Transverse colon (tissue), 4 donors: ENCODE measurements at regions of chr2 and their contacts with region 1.

Region 1: GRCh38 chr2:239561446-239562001 is 160.7 kb upstream of the HDAC4 start:
- DNase-seq: peak; percentile 25
- H3K4me3 ChIP-seq: no peak overlapping the region
- H3K27ac ChIP-seq: no peak overlapping the region
- H3K4me1 ChIP-seq: no peaks in the 10 kb centered on the region
- H3K27me3 ChIP-seq: peaks cover 12% of the 10 kb centered on the region
- CTCF ChIP-seq: no peak
- EP300 ChIP-seq: no peak
- POLR2A ChIP-seq: no peak

Region 2: GRCh38 chr2:239257511-239257937 is 304.0 kb before region 1 on chr2:
- in situ Hi-C with region 1: no loop called
- intact Hi-C with region 1: no loop called
- DNase-seq: no peak
- H3K4me3 ChIP-seq: no peak overlapping the region
- H3K27ac ChIP-seq: peak overlapping the region; percentile 8 to 57 (median 30)
- H3K4me1 ChIP-seq: peaks cover 9 to 60% (median 23%) of the 10 kb centered on the region in 4 donors
- H3K27me3 ChIP-seq: no peaks in the 10 kb centered on the region
- CTCF ChIP-seq: no peak
- EP300 ChIP-seq: no peak
- POLR2A ChIP-seq: no peak

Region 3: GRCh38 chr2:239516954-239517305 is 44.6 kb before region 1 on chr2:
- in situ Hi-C with region 1: no loop called
- intact Hi-C with region 1: loop called (anchors 1 kb)
- DNase-seq: no peak
- H3K4me3 ChIP-seq: no peak overlapping the region
- H3K27ac ChIP-seq: no peak overlapping the region
- H3K4me1 ChIP-seq: no peaks in the 10 kb centered on the region
- H3K27me3 ChIP-seq: no peaks in the 10 kb centered on the region
- CTCF ChIP-seq: no peak
- EP300 ChIP-seq: no peak
- POLR2A ChIP-seq: no peak

Region 4: GRCh38 chr2:239695728-239696240 is 134.3 kb after region 1 on chr2:
- in situ Hi-C with region 1: no loop called
- intact Hi-C with region 1: loop called (anchors 1 kb)
- DNase-seq: no peak
- H3K4me3 ChIP-seq: no peak overlapping the region
- H3K27ac ChIP-seq: no peak overlapping the region
- H3K4me1 ChIP-seq: no peaks in the 10 kb centered on the region
- H3K27me3 ChIP-seq: no peaks in the 10 kb centered on the region
- CTCF ChIP-seq: no peak
- EP300 ChIP-seq: no peak
- POLR2A ChIP-seq: no peak

Region 5: GRCh38 chr2:240217431-240218239 is 656.1 kb after region 1 on chr2:
- in situ Hi-C with region 1: no loop called
- intact Hi-C with region 1: no loop called
- DNase-seq: no peak
- H3K4me3 ChIP-seq: no peak overlapping the region
- H3K27ac ChIP-seq: no peak overlapping the region
- H3K4me1 ChIP-seq: no peaks in the 10 kb centered on the region
- H3K27me3 ChIP-seq: peaks cover 11% of the 10 kb centered on the region
- CTCF ChIP-seq: no peak
- EP300 ChIP-seq: no peak
- POLR2A ChIP-seq: no peak